Right ventricle myocardium inferior (tissue), 1 donor: ENCODE measurements at regions of chrX and their contacts with region 1.

Region 1: DNA sequence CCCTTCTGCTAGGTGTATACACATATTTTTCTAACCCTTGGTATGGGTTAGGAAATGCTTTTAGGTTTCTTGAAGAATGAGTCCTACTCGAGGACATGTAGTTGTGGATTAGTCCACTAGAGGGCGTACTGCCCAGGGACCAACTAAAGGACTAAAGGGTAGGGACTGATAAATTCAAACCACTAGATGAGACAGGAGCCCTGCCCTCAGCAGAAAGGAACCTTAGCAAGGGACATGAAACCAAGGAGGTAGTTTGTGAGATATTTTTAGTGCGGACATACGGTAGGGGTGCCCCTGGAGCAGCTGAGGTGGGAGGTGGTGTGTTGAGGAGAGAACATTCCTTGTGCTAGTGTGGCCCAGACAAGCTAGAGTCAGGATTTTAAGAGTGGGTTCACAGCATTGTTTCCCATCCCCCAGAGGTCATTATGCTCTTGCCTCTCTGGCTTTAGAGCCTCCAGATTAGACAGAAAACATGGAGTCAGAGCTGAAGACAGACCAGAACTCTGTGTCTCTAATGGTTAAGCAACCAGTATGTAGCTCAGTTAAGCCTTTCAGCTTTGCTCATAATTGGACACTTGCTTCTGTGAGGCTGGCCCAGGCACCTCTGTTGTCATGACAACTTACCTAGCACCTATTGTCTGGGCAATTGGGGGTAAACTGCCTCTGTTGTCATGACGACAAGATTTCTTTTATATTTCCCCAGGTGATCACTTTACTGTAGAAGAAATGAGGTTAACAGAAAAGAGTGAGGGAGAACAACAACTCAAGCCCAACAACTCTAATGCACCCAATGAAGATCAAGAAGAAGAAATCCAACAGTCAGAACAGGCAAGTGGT is 1.0 kb downstream of the TMEM31 start:
- DNase-seq: no peak
- ATAC-seq: no peak

Region 2: DNA sequence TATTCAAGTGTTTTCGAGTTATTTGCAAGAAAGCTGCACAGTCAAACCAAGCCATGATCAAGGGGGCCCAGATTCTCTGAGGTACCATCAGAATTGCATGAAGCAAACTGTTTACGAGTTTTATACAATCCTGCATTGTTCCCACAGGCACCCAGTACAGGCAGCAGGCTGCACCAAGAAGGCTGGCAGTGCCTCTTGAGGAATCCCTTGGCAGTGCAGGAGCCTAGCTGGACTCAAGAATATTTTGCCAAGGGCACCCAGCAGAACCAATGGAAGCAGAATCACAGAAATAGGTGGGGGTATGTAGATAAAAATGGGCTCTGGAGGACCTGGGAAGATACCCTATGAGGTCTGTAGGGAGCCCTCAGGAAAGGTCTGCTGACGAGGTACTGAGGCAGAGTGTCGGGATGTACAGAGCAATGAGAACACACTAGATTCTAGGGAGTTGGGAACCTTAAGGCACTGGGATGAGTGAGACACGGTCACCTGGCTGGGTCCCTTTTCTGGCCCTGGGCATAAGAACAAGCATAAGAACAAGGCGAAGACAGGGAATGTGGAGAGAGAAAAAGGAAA is 62.4 kb after region 1 on chrX:
- intact Hi-C with region 1: loop called (anchors 10 kb)
- DNase-seq: no peak
- ATAC-seq: peak; percentile 50